ENCODE measurements at regions of chr11 and their contacts with region 1.

Region 1: GRCh38 chr11:110296226-110297075 is at the start of gene RDX:
- DNase-seq: peak; percentile 63
- H3K4me3 Mint-ChIP-seq: peak within 1 kb of the TSS; percentile 86
- H3K27ac Mint-ChIP-seq: peak within 1 kb of the TSS; percentile 65
- H3K4me1 Mint-ChIP-seq: peaks cover 54% of the 10 kb centered on the region
- H3K27me3 Mint-ChIP-seq: no peaks in the 10 kb centered on the region
- total RNA-seq, gene RDX: 94.6 and 98.9 TPM in 2 replicates

Region 2: GRCh38 chr11:110251837-110252236 is 44.6 kb before region 1 on chr11:
- intact Hi-C with region 1: loop called (anchors 2 kb)
- DNase-seq: no peak
- H3K4me3 Mint-ChIP-seq: no peak overlapping the region
- H3K27ac Mint-ChIP-seq: peak overlapping the region; percentile 40
- H3K4me1 Mint-ChIP-seq: peaks cover 14% of the 10 kb centered on the region
- H3K27me3 Mint-ChIP-seq: no peaks in the 10 kb centered on the region

Region 3: DNA sequence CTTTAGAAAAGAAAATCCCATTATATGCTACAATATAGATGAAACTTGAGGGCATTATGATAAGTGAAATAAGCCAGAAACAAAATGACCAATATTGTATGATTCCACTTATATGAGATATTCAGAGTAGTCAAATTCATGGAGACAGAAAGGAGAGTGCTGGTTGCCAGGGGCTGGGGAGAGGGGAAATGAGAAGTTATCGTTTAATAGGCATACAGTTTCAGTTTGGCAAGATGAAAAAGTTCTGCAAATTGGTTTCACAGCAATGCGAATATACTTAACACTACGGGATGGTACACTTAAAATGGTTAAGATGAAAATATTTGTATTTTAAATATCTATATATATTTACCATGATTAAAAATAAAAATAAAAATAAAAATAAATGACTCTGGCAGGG is 31.1 kb after region 1 on chr11:
- intact Hi-C with region 1: loop called (anchors 1 kb)
- DNase-seq: no peak
- H3K4me3 Mint-ChIP-seq: peak overlapping the region; percentile 96
- H3K27ac Mint-ChIP-seq: peak overlapping the region; percentile 98
- H3K4me1 Mint-ChIP-seq: peaks cover 49% of the 10 kb centered on the region
- H3K27me3 Mint-ChIP-seq: no peaks in the 10 kb centered on the region

Measured in activated T-helper 1 cell treated with anti-CD3 and anti-CD28 coated beads, Interleukin-12 subunit alpha, Interleukin-12 subunit beta, Interleukin-2, Interleukin-4 antibody, amounts not matched to agents 30 ng/mL and 10 ng/mL and 1 ng/mL, durations not matched to agents 14 hours and 24 hours and 36 hours (primary cell).